Astrocyte of the cerebellum (primary cell): ENCODE measurements at regions of chr6 and their contacts with region 1.

Region 1: GRCh38 chr6:48765352-48765961 is 654.5 kb upstream of the PTCHD4 start:
- DNase-seq: peak; percentile 47
- H3K4me3 ChIP-seq: no peak overlapping the region
- CTCF ChIP-seq: peak; percentile 67

Region 2: DNA sequence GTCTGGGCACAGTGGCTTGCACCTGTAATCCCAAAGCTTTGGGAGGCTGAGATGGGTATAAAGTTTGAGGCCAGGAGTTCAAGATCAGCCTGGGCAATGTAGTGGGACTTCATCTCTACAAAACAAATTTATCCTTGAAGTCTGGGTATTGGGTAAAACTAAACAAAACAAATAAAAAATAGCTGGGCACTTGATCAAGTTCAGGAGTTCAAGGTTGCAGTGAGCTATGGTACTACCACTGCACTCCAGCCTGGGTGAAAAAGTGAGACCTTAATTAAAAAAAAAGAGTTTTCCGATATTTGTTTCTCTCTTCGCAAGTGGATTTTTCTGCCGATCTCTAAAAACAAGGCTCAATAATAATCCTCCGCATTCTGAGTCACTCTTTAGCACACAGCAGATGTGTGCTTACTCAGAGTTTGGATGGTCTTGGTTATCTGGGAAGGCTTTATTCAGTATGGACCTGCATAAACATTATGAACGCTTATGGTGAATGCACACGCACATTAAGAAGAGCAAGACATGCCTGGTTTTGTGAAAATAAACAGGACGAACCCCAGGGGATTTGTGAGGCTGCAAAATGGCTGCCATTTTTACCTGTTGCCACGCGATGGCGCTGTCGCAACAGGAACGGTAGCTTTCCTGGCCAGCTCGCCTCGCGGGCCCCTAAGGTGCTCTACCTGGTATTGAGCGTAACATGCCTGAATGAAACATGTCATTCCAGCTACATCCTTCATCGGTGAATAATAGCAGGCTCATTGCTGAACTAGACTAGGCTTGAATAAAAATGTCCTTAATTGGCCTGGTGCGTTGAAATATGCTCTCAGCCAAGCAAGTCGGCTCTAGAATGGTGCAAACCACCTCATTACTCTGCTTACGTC is 977.6 kb before region 1 on chr6:
- in situ Hi-C with region 1: loop called (anchors 25 kb)
- DNase-seq: peak; percentile 18
- H3K4me3 ChIP-seq: no peak overlapping the region
- CTCF ChIP-seq: peak; percentile 86

Region 3: DNA sequence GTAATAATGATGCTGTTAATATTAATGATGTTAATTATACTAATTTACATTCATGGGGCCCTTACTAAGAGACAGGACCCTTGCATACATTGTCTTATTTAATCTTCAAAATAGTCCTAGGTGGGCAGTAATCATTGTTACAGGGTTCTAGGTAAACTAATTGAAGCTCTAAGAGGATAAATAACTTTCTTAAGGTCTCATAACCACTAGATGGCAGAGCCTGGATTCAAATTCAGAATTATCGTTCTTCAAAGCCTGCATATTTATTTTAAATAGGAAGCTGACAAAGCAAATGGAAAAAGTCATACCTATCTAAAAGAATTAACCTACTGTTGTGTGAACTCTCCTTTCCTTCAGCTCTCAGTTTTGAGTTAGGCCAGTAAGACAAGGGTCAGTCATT is 678.0 kb before region 1 on chr6:
- in situ Hi-C with region 1: loop called (anchors 25 kb)
- DNase-seq: no peak
- H3K4me3 ChIP-seq: no peak overlapping the region
- CTCF ChIP-seq: peak; percentile 28